ENCODE measurements at regions of chr13 and their contacts with region 1.

Region 1: DNA sequence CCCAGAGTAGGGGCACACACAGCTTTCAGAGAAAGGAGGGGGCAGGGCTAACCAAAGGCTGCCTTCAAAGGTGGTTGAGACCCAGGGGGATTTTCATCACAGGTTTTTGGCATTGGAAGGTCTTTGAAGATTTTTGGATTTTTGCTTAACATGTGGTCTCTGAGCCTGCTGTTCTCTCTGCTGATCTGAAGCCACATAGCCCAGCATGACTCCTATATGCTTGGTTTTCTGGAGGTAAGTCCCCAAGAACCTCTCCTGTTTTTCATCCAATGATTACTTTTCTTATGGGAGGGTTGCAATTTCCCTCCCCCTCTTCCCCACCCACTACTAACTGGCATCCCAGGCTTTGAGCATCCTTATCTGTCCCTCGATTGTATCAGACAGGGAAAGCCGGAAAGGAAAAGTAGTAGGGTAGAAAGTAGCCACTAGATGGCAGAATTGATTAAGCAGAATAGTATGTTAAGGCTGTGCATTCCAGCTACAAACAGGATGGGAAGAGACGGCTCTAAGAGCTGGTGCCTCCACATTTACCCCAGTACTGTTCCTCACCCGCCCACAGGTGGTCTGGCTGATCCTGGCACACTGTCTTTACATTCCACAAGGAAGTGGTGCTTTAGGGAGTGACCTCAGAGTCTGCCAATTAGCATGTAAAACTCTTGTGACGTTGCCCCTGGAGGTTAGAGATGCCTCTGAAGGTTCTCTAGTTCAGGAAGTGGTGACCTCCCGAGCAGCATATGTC is 218.9 kb upstream of the EDNRB start:
- DNase-seq: peak in 4 of 14 experiments; percentile 10 to 55 (median 43)
- ATAC-seq: peak; percentile 65
- H3K4me3 ChIP-seq: no peak overlapping the region
- H3K4me3 Mint-ChIP-seq: no peak overlapping the region
- H3K27ac ChIP-seq: no peak overlapping the region
- H3K27ac Mint-ChIP-seq: no peak overlapping the region
- H3K4me1 ChIP-seq: peaks cover 7% of the 10 kb centered on the region
- H3K4me1 Mint-ChIP-seq: peaks cover 6% of the 10 kb centered on the region
- H3K27me3 ChIP-seq: no peaks in the 10 kb centered on the region
- H3K27me3 Mint-ChIP-seq: peaks cover 4% of the 10 kb centered on the region
- CTCF ChIP-seq: peak; percentile 79

Region 2: GRCh38 chr13:78194904-78195639 is 57.5 kb after region 1 on chr13:
- CTCF ChIA-PET with region 1: no interaction called
- POLR2A ChIA-PET with region 1: no interaction called
- intact Hi-C with region 1: no loop called
- DNase-seq: no peak
- ATAC-seq: no peak
- H3K4me3 ChIP-seq: no peak overlapping the region
- H3K4me3 Mint-ChIP-seq: no peak overlapping the region
- H3K27ac ChIP-seq: no peak overlapping the region
- H3K27ac Mint-ChIP-seq: no peak overlapping the region
- H3K4me1 ChIP-seq: no peaks in the 10 kb centered on the region
- H3K4me1 Mint-ChIP-seq: no peaks in the 10 kb centered on the region
- H3K27me3 ChIP-seq: no peaks in the 10 kb centered on the region
- H3K27me3 Mint-ChIP-seq: peaks cover 7% of the 10 kb centered on the region
- CTCF ChIP-seq: no peak

Region 3: DNA sequence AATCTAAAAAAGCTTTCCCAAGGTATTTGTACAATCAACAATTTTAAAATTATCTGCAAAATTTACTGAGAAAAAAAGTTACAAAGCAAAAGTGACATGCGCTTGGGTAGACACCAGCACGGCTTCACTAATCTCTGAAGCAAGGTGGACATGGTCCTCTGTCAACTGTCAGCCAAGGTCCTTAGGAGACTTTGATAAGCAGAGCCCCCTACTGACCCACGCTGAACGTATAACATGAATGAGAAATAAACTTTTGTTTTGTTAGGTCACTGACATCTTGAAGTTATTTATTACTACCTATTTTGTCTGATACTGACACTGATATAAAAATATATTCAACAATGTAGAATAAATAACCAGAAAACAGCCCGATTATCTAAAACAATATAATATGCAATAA is 622.1 kb after region 1 on chr13:
- CTCF ChIA-PET with region 1: no interaction called
- POLR2A ChIA-PET with region 1: interaction called, 3 read pairs
- intact Hi-C with region 1: loop called (anchors 2 to 5 kb)
- DNase-seq: no peak
- ATAC-seq: no peak
- H3K4me3 ChIP-seq: no peak overlapping the region
- H3K4me3 Mint-ChIP-seq: no peak overlapping the region
- H3K27ac ChIP-seq: no peak overlapping the region
- H3K27ac Mint-ChIP-seq: no peak overlapping the region
- H3K4me1 ChIP-seq: no peaks in the 10 kb centered on the region
- H3K4me1 Mint-ChIP-seq: no peaks in the 10 kb centered on the region
- H3K27me3 ChIP-seq: peaks cover 0 to under 1% of the 10 kb centered on the region in 2 experiments
- H3K27me3 Mint-ChIP-seq: peaks cover 16% of the 10 kb centered on the region
- CTCF ChIP-seq: no peak

Region 4: DNA sequence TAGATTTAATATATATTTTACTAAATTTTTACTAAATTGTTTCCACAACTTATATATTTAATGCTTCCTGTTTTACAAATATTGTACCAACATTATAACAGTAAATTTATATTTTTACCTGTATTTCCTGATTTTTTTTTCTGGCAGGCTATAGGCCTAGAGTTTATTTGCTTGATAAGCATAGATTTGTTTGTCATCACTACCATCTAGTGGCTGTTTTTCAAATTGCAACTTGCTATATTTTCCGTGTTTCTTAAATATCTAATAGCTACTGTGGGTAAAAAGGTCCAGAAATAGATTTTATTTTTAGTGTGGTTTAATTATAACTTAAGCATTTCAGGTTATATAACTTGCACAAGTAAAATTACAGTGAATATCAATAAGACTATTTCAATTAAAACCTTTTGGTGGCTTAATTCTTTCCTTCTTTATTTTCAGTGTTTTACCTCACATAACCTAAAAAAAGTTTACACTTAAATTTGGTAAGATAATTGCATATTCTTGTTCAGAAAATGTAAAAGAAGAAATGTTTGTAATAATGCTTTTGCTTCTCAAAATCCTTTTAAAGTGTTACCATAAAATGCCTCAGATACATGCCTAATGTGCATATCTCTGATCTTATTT is 1404.0 kb after region 1 on chr13:
- CTCF ChIA-PET with region 1: no interaction called
- POLR2A ChIA-PET with region 1: no interaction called
- intact Hi-C with region 1: loop called (anchors 2 kb)
- DNase-seq: peak in 3 of 14 experiments; percentile 73 to 82 (median 80)
- ATAC-seq: peak; percentile 63
- H3K4me3 ChIP-seq: no peak overlapping the region
- H3K4me3 Mint-ChIP-seq: no peak overlapping the region
- H3K27ac ChIP-seq: no peak overlapping the region
- H3K27ac Mint-ChIP-seq: no peak overlapping the region
- H3K4me1 ChIP-seq: no peaks in the 10 kb centered on the region
- H3K4me1 Mint-ChIP-seq: no peaks in the 10 kb centered on the region
- H3K27me3 ChIP-seq: no peaks in the 10 kb centered on the region
- H3K27me3 Mint-ChIP-seq: no peaks in the 10 kb centered on the region
- CTCF ChIP-seq: peak; percentile 97

Measured in CD4-positive, alpha-beta T cell (primary cell).